ENCODE measurements at regions of chr3 and their contacts with region 1.

Region 1: GRCh38 chr3:196988241-196989029 is 19.8 kb upstream of the PIGZ start:
- DNase-seq: peak; percentile 32 to 58 (median 42)
- ATAC-seq: peak; percentile 70
- H3K4me3 ChIP-seq: no peak overlapping the region
- H3K27ac ChIP-seq: no peak overlapping the region
- H3K4me1 ChIP-seq: peaks cover 11% of the 10 kb centered on the region
- H3K27me3 ChIP-seq: no peaks in the 10 kb centered on the region
- CTCF ChIP-seq: peak in 4 of 7 experiments; percentile 6 to 38 (median 26)
- POLR2A ChIP-seq: no peak

Region 2: DNA sequence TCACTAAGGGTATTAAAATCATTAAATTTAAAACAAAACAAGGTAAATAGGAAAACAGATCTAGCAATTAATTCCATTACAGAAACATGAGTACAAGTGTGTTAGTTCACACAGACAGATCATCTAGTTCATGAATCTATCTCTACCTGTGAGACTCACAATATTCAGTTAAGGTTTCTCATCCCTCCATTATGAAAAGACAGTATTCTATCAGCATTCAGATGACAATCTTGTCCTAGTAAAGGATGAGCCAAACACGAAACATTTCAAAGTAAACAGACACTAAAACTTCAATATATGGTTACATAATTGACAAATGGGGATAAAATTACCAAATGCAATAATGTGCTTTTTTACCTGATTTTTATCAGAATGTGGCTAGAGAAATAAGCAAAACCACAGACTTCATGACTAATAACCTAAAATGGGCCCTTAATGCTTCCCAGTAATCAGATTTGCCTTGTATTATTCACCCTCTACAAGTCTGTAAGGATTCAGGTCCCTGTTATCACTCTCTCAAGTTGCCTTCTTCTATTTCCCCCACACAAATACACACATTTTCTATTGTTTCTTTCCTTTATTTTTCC is 183.1 kb after region 1 on chr3:
- intact Hi-C with region 1: loop called (anchors 10 kb)
- DNase-seq: no peak
- ATAC-seq: no peak
- H3K4me3 ChIP-seq: no peak overlapping the region
- H3K27ac ChIP-seq: no peak overlapping the region
- H3K4me1 ChIP-seq: peaks cover 4% of the 10 kb centered on the region
- H3K27me3 ChIP-seq: no peaks in the 10 kb centered on the region
- CTCF ChIP-seq: no peak
- POLR2A ChIP-seq: no peak

Measured in body of pancreas (tissue), 4 donors.